ENCODE measurements at regions of chr1 and their contacts with region 1.

Region 1: GRCh38 chr1:156740679-156741612 is at the start of gene MRPL24:
- H3K4me3 Mint-ChIP-seq: peak within 1 kb of the TSS; percentile 98
- H3K27ac Mint-ChIP-seq: peak within 1 kb of the TSS; percentile 92
- H3K4me1 Mint-ChIP-seq: peaks cover 51% of the 10 kb centered on the region
- H3K27me3 Mint-ChIP-seq: no peaks in the 10 kb centered on the region

Region 2: DNA sequence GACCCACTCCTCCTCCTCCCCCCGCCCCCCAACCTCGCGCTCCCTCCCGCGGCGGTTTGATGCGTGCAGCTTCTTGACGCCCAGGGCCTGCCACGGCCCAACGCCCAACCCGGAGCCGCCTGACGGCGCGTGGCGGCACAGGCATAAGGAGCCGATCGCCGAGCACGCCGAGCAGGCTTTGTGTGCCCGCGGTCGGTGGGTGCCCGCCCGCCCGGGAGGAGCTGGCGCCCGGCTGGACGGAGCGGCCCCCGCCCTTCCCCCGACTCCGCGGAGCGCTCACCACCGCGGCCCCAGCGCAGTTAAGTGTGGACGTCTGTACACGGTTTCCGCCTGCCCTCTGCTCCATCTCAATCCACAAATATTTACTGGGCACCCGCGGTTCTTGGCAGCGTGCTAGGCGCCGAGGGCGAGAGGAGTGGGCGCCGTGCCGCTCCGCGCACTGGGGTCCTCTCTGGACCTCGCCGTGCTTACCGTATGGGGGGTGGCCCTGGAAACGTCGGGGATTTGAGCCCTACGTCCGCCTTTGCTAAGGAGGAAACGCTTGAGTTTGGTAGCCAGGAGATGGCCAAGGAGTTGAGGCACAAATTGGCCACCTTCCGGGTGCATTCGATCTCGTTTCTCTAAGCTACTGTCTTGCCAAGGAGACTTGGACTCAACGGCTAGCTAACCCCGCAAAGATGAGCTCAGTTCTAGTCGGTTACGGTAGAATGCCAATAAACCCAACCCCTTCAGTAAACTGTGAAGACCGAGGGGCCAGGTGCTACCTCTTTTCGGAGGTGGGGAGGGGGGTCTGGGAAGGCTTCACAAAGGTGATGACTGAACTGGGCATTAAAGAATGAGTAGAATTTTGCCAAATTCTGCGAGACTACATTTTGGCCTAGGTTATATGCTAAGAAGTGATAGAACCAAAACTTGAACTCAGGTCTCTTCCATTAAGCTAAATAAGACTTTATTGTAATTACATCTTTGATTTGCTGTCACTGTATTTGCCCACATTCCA is 11.1 kb after region 1 on chr1:
- intact Hi-C with region 1: loop called (anchors 1 kb)
- H3K4me3 Mint-ChIP-seq: peak overlapping the region; percentile 91
- H3K27ac Mint-ChIP-seq: peak overlapping the region; percentile 92
- H3K4me1 Mint-ChIP-seq: peaks cover 46% of the 10 kb centered on the region
- H3K27me3 Mint-ChIP-seq: no peaks in the 10 kb centered on the region

Region 3: GRCh38 chr1:156767101-156767878 is 26.3 kb after region 1 on chr1 and contains the start of gene PRCC:
- intact Hi-C with region 1: loop called (anchors 1 kb)
- H3K4me3 Mint-ChIP-seq: no peak within 1 kb of the TSS
- H3K27ac Mint-ChIP-seq: no peak within 1 kb of the TSS
- H3K4me1 Mint-ChIP-seq: peaks cover 53% of the 10 kb centered on the region
- H3K27me3 Mint-ChIP-seq: no peaks in the 10 kb centered on the region